ENCODE measurements at regions of chr19 and their contacts with region 1.

Region 1: DNA sequence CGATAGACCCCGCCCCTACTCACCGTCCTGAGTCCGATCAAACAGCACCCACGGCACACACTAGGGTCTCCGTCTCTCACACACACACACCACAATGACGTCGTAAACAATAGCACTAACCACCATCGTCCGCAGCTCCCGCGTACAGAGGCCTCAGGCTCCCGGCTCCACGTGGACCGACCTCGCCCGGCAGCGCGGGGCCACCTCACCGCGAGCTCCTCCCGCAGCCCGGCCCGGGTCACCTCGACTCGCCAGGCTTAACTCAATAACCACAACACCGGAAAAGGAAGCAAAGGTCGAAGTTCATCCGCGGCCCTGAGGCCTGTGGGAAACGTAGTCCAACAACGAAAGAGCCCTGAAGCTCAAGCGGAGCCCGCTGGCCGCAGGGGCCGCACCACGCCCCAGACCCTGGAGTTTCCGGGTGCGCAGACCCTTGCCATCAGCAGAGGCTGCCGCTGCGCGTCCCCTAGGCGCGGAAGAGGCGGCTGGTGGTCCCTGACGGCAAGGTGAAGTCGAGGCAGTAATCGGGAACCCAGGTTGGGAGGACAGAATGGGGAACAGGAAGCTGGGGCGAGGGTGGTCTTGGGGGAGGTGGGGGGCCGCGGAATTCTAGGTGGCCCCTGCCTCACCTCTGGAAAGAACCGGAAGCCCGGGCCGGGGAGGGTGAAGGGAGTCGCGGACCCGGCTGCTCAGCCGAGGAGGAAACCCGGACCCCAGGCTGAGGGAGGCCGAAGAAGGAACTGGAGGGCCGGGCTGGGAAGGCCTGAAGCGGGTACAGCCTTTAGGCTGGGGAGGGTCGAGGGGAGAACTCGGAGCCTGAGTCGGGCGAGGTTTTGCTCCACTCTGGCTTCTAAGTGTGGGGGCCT is at the start of gene ZNF529:
- DNase-seq: peak; percentile 98
- H3K4me3 ChIP-seq: peak within 1 kb of the TSS; percentile 75 to 94 (median 82)
- H3K27ac ChIP-seq: peak within 1 kb of the TSS; percentile 82 to 88 (median 84)
- H3K4me1 ChIP-seq: peaks cover 15 to 30% (median 22%) of the 10 kb centered on the region in 4 donors
- H3K27me3 ChIP-seq: no peaks in the 10 kb centered on the region
- CTCF ChIP-seq: no peak
- EP300 ChIP-seq: no peak
- POLR2A ChIP-seq: peak; percentile 27
- total RNA-seq, gene ZNF529: 11.6 to 17.6 (median 12.7) TPM

Region 2: GRCh38 chr19:36528194-36528920 is 44.9 kb before region 1 on chr19 and contains the start of gene ZNF260:
- intact Hi-C with region 1: loop called (anchors 2 kb)
- DNase-seq: peak; percentile 98
- H3K4me3 ChIP-seq: peak within 1 kb of the TSS; percentile 67 to 77 (median 71)
- H3K27ac ChIP-seq: peak within 1 kb of the TSS; percentile 81 to 93 (median 90)
- H3K4me1 ChIP-seq: peaks cover 18 to 30% (median 27%) of the 10 kb centered on the region in 4 donors
- H3K27me3 ChIP-seq: no peaks in the 10 kb centered on the region
- CTCF ChIP-seq: peak in 1 of 3 experiments; percentile 8
- EP300 ChIP-seq: no peak
- POLR2A ChIP-seq: peak; percentile 3
- total RNA-seq, gene ZNF260: 7.7 to 12.4 (median 10.7) TPM

Region 3: DNA sequence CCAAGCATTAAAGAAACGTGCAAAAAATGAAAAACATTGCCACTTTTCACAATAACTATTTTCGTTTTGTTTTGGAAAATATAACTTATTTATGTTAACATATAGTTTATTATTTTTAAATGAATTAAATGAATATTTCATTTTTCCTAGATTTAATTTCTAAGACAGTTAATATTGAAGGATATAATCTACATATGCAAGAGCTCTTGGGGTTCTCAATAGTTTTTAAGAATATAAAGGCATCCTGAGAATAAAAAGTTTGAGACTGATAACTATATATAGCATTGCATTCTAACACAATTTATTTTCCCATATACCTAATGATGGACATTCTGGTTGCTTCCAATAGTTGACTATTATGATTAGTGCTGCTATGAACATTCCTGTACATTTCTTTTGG is 73.5 kb after region 1 on chr19:
- intact Hi-C with region 1: no loop called
- DNase-seq: no peak
- H3K4me3 ChIP-seq: no peak overlapping the region
- H3K27ac ChIP-seq: no peak overlapping the region
- H3K4me1 ChIP-seq: no peaks in the 10 kb centered on the region
- H3K27me3 ChIP-seq: no peaks in the 10 kb centered on the region
- CTCF ChIP-seq: no peak
- EP300 ChIP-seq: no peak
- POLR2A ChIP-seq: no peak

Region 4: GRCh38 chr19:36665832-36666231 is 92.6 kb after region 1 on chr19:
- intact Hi-C with region 1: loop called (anchors 10 kb)
- DNase-seq: no peak
- H3K4me3 ChIP-seq: peak overlapping the region; percentile 62 to 86 (median 70)
- H3K27ac ChIP-seq: no peak overlapping the region
- H3K4me1 ChIP-seq: peaks cover 12 to 28% (median 20%) of the 10 kb centered on the region in 4 donors
- H3K27me3 ChIP-seq: no peaks in the 10 kb centered on the region
- CTCF ChIP-seq: no peak
- EP300 ChIP-seq: no peak
- POLR2A ChIP-seq: no peak